Heart left ventricle (tissue), 16 donors: ENCODE measurements at regions of chr2 and their contacts with region 1.

Region 1: DNA sequence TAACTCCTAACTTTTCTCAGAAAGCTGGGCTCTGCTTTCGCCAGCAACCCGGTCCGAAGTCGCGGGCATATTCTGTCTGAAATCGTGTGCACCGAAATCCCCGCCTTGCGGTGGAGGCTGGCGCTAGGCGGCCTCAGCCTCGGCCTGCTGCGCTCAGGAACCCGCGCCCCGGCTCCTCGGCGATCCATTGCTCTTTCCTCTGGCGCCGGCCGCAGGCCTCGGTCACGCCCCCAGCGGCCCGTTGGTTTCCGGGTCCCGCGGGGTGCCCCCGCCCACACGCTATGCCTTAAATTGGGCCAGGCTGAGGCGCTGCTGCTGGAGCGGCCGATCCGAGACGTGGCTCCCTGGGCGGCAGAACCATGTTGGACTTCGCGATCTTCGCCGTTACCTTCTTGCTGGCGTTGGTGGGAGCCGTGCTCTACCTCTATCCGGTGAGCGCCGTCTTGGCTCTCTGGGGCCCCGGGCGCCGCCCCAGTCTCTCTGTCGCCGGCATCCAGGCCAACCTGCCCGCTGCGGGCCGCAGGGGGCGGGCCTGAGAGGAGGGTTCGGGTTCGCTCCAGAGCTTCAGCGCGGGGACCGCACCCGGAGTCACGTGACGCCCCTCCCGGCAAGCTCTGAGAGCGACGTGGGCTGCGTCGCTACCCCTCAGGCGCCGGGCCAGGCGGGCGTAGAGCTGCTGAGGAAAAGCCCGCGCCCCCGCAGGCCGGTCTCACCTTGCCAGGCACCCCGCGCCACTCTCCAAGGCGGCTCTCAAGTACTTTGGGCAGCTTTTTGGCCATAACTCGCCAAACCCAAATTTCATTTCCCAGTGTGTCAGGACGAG is at the start of gene CYP20A1:
- DNase-seq: peak; percentile 96 to 99 (median 98)
- ATAC-seq: peak; percentile 97 to 99 (median 98)
- H3K4me3 ChIP-seq: peak within 1 kb of the TSS; percentile 63 to 96 (median 82)
- H3K27ac ChIP-seq: peak within 1 kb of the TSS; percentile 84 to 99 (median 98)
- H3K4me1 ChIP-seq: peaks cover 0 to 26% (median 15%) of the 10 kb centered on the region in 12 donors
- H3K27me3 ChIP-seq: no peaks in the 10 kb centered on the region
- CTCF ChIP-seq: peak; percentile 11 to 53 (median 40)
- POLR2A ChIP-seq: peak; percentile 7 to 82
- total RNA-seq, gene CYP20A1: 7.9 to 18.8 (median 14.8) TPM

Region 2: DNA sequence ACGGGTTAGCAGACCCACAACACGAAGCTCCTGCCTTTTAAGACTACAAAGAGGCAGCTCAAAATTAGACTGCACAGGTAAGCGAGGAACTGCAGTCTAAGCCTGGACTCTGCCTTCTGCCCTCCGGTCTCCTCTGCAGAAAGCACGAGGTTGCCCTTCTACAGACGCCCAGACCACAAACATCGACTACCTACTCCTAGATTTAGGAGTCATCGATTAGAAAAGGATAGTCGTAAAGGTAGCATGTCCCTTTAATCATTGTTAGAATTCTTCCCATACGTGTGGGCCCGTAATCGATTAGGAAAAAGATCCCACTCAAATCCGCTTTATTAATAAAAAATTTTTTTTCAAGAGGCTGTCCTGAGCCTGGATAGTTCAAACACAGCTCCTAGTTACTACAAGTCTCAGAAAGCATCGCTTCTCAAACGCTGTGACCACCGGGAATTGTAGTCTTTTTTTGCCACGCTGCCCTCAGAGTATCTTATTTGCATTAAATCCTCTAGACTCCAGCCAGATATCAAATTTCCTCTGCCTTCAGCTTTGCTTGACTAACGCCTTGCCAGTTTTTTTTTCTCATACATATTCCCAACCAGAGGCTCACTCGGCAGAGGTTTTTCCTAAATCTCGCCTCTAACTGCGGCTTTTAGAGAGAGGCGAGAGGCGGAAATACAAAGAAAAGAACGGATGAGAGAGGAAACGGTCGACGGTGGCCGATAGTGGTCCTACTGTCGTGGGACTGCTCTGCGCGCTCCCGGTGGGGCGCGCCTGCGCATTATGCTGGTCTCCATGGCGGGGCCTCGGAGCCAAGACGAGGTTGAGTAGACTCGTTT is 327.2 kb before region 1 on chr2 and contains the starts of genes CARF and WDR12:
- intact Hi-C with region 1: loop called in 1 of 10 experiments (anchors 5 kb)
- DNase-seq: peak; percentile 94 to 96 (median 94)
- ATAC-seq: peak; percentile 97 to 98 (median 98)
- H3K4me3 ChIP-seq: peak within 1 kb of the TSS; percentile 61 to 85 (median 70)
- H3K27ac ChIP-seq: peak within 1 kb of the TSS; percentile 71 to 98 (median 86)
- H3K4me1 ChIP-seq: peaks cover 0 to 29% (median 17%) of the 10 kb centered on the region in 12 donors
- H3K27me3 ChIP-seq: no peaks in the 10 kb centered on the region
- CTCF ChIP-seq: no peak
- POLR2A ChIP-seq: peak in 1 of 2 donors; percentile 55
- total RNA-seq, gene CARF: 2.2 to 12.2 (median 7.4) TPM
- total RNA-seq, gene WDR12: 12.9 to 56.3 (median 42.3) TPM

Region 3: GRCh38 chr2:203327901-203328759 is 89.2 kb after region 1 on chr2 and contains the start of gene ABI2:
- intact Hi-C with region 1: loop called in 2 of 10 experiments (anchors 2 kb)
- DNase-seq: peak; percentile 89 to 93 (median 91)
- ATAC-seq: peak; percentile 82 to 97 (median 95)
- H3K4me3 ChIP-seq: peak within 1 kb of the TSS; percentile 66 to 100 (median 92)
- H3K27ac ChIP-seq: peak within 1 kb of the TSS; percentile 39 to 94 (median 87)
- H3K4me1 ChIP-seq: peaks cover 0 to 37% (median 18%) of the 10 kb centered on the region in 12 donors
- H3K27me3 ChIP-seq: no peaks in the 10 kb centered on the region
- CTCF ChIP-seq: peak in 1 of 12 donors; percentile 11
- POLR2A ChIP-seq: peak in 1 of 2 donors; percentile 35
- total RNA-seq, gene ABI2: 35.4 to 78.8 (median 53.5) TPM

Region 4: DNA sequence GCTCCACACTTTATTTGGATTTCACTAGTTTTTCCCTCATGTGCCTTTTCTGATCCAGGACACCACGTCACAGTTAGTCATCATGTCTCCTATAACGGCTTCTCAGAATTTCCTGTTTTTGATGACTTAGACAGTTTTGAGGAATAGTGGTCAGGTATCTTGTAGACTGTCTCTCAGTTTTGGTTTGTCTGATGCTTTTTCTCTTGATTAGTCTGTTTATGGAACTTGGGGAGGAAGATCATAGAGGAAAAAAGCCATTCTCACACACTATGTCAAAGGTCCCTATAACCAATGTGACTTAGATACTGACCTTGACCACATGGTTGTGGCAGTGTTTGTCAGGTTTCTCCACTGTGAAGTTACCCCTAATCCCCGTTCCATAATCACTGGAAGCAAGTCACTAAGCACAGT is 207.2 kb after region 1 on chr2:
- intact Hi-C with region 1: loop called in 2 of 10 experiments (anchors 5 to 10 kb)
- DNase-seq: no peak
- ATAC-seq: no peak
- H3K4me3 ChIP-seq: no peak overlapping the region
- H3K27ac ChIP-seq: no peak overlapping the region
- H3K4me1 ChIP-seq: peaks cover 0 to 27% (median 8%) of the 10 kb centered on the region in 12 donors
- H3K27me3 ChIP-seq: no peaks in the 10 kb centered on the region
- CTCF ChIP-seq: no peak
- POLR2A ChIP-seq: no peak

Region 5: GRCh38 chr2:203453858-203454451 is 215.0 kb after region 1 on chr2:
- intact Hi-C with region 1: loop called in 2 of 10 experiments (anchors 5 to 10 kb)
- DNase-seq: peak in 2 of 5 donors; percentile 20 to 36
- ATAC-seq: peak; percentile 36 to 73 (median 64)
- H3K4me3 ChIP-seq: no peak overlapping the region
- H3K27ac ChIP-seq: no peak overlapping the region
- H3K4me1 ChIP-seq: peaks cover 0 to 23% (median 7%) of the 10 kb centered on the region in 12 donors
- H3K27me3 ChIP-seq: no peaks in the 10 kb centered on the region
- CTCF ChIP-seq: peak; percentile 58 to 84 (median 70)
- POLR2A ChIP-seq: no peak

Region 6: GRCh38 chr2:203814661-203815540 is 576.0 kb after region 1 on chr2:
- intact Hi-C with region 1: loop called in 1 of 10 experiments (anchors 5 kb)
- DNase-seq: peak in 4 of 5 donors; percentile 41 to 59 (median 44)
- ATAC-seq: peak; percentile 79 to 89 (median 85)
- H3K4me3 ChIP-seq: peak overlapping the region in 4 of 12 donors; percentile 20 to 36 (median 22)
- H3K27ac ChIP-seq: peak overlapping the region in 6 of 12 donors; percentile 4 to 67 (median 22)
- H3K4me1 ChIP-seq: peaks cover 0 to 61% (median 11%) of the 10 kb centered on the region in 12 donors
- H3K27me3 ChIP-seq: no peaks in the 10 kb centered on the region
- CTCF ChIP-seq: peak; percentile 69 to 89 (median 80)
- POLR2A ChIP-seq: no peak